ENCODE measurements at regions of chr14 and their contacts with region 1.

Region 1: DNA sequence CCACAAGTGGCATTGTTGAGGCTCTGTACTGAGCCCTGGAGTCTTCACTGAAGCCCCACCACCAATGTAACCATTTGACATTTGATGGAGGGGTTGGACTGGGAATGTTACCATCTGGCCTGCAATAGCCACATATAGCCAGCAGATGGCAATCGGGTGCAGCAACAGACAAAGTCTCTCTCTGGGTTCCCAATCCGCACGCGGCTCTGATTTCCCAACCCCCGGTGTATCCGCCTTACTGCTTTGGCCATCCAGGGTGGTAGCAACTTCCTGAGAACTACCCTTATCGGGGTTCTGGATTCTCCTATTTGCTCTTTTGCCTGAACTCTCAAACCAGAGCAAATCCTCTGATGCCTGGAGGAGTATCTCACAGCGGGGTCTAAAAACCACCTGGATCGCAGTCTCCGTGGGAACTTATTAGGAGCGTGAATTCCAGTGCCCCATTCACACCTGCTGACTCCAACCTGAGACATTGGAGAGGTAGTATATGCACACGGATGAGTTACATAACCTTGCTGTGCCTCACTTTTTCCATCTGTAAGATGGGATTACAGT is 14.2 kb downstream of the VRTN start:
- DNase-seq: peak; percentile 21
- ATAC-seq: peak; percentile 91
- H3K4me3 ChIP-seq: no peak overlapping the region
- H3K27ac ChIP-seq: no peak overlapping the region
- H3K4me1 ChIP-seq: no peaks in the 10 kb centered on the region
- H3K27me3 ChIP-seq: peaks cover 3 to 4% of the 10 kb centered on the region in 2 experiments
- CTCF ChIP-seq: peak; percentile 93 to 98 (median 96)
- EP300 ChIP-seq: no peak
- POLR2A ChIP-seq: no peak
- RAD21 ChIP-seq: peak; percentile 90

Region 2: GRCh38 chr14:74261288-74261687 is 101.2 kb before region 1 on chr14:
- CTCF ChIA-PET with region 1: no interaction called
- POLR2A ChIA-PET with region 1: no interaction called
- RAD21 ChIA-PET with region 1: no interaction called
- SMC1A ChIA-PET with region 1: no interaction called
- in situ Hi-C with region 1: no loop called
- intact Hi-C with region 1: no loop called
- DNase-seq: no peak
- ATAC-seq: no peak
- H3K4me3 ChIP-seq: no peak overlapping the region
- H3K27ac ChIP-seq: no peak overlapping the region
- H3K4me1 ChIP-seq: peaks cover 6% of the 10 kb centered on the region
- H3K27me3 ChIP-seq: peaks cover 3 to 4% of the 10 kb centered on the region in 2 experiments; a peak in 3 of 4 replicates
- CTCF ChIP-seq: no peak
- EP300 ChIP-seq: no peak
- POLR2A ChIP-seq: no peak
- RAD21 ChIP-seq: no peak

Region 3: DNA sequence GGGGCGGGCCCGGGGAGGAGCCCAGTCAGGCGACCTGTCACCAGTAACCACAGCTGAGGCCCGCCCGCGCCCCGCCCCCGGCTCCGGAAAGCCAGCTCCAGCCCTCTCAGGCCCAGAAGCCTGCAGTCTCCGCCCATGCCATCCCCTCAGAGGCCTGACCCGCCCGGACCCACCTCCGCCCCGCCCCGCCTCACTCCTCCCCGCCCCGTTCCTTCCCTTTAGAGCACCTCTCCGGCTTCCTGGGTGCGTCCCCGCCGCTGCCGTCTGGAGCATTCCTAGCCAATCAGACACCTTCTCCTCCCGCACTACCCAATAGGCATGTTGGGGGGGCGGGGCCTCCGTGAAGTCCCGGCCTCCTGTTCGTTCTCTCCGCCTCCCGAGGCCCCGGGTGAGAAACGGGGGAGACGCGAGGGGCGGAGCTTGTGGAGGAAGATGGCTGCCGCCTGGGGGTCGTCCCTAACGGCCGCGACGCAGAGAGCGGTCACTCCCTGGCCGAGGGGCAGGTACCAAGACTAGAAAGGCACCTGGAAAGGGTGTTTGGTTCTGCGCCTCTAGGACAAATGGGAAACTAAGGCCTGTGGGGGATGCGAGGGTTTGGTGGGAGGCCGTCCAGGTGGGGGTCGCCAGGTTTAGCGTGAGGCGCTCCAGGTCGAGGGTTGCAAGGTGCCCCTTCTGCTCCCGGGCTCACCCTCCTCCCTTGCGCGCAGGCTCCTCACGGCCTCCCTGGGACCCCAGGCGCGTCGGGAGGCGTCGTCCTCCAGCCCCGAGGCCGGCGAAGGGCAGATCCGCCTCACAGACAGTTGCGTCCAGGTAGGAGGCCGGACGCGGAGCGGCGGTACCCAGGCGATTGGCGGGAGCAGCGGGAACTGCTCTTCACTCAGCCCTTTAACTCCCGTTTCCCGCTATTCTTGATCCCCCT is 131.2 kb after region 1 on chr14 and contains the start of gene ISCA2:
- CTCF ChIA-PET with region 1: interaction called, 14 read pairs
- POLR2A ChIA-PET with region 1: no interaction called
- RAD21 ChIA-PET with region 1: interaction called, 4 read pairs
- SMC1A ChIA-PET with region 1: interaction called, 13 read pairs
- in situ Hi-C with region 1: no loop called
- intact Hi-C with region 1: loop called (anchors 1 kb)
- DNase-seq: peak; percentile 97
- ATAC-seq: peak; percentile 94
- H3K4me3 ChIP-seq: peak within 1 kb of the TSS; percentile 98
- H3K27ac ChIP-seq: peak within 1 kb of the TSS; percentile 72
- H3K4me1 ChIP-seq: peaks cover 7% of the 10 kb centered on the region
- H3K27me3 ChIP-seq: no peaks in the 10 kb centered on the region
- CTCF ChIP-seq: no peak
- EP300 ChIP-seq: no peak
- POLR2A ChIP-seq: peak; percentile 85
- RAD21 ChIP-seq: no peak
- polyA plus RNA-seq, gene ISCA2: 7.5 to 22.5 TPM

Region 4: DNA sequence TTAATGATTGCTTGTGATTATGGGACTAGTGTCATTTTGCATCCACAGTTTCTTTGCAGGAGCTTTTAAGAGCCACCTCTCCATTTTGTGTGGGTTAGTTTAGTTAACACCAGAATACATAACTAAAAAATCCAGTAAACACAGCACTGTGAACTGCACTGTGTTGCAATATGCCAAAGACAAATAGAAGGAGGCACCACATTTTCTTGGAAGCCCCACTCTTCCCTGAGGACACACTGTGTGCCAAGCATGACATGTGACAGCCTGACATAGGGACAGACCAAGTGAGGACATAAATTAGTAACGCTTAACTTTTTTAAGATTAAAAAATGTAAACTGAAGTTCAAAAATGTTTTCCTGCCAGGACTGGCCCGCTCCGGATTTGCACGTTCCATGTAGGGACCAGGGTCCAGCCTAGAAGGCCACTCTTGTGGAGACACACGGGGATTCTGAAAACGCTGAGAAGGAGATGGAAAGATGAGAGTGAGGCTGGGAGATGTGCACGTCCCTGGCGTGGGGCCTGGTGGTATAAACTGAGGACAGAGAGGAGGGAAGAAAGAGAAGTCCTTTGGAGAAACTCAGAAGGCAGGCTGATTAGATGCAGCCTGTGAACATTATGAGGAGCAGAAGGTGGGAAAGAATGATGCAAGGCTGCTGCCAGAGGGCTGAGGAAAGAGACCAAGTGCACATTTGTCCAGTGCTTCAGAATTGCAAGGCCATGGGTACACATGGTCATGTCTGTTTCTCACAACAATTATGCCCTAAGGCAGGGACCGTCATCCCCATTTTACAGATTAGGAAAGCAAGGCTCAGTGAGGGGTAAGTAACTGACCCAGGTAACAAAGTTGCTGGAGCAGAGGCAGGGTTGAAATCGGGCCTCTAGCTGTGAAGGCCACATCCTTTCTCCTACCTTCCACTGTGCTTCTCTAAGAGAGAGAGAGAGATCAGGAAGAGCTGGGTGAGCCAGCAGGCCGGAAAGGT is 176.3 kb after region 1 on chr14:
- CTCF ChIA-PET with region 1: no interaction called
- POLR2A ChIA-PET with region 1: no interaction called
- RAD21 ChIA-PET with region 1: no interaction called
- SMC1A ChIA-PET with region 1: no interaction called
- in situ Hi-C with region 1: no loop called
- intact Hi-C with region 1: loop called (anchors 5 kb)
- DNase-seq: no peak
- ATAC-seq: no peak
- H3K4me3 ChIP-seq: no peak overlapping the region
- H3K27ac ChIP-seq: no peak overlapping the region
- H3K4me1 ChIP-seq: no peaks in the 10 kb centered on the region
- H3K27me3 ChIP-seq: peaks cover 2% of the 10 kb centered on the region in 2 experiments; a peak in 3 of 4 replicates
- CTCF ChIP-seq: no peak
- EP300 ChIP-seq: no peak
- POLR2A ChIP-seq: no peak
- RAD21 ChIP-seq: no peak

Measured in GM12878 (cell line).